MCF 10A (cell line): ENCODE measurements at regions of chr3 and their contacts with region 1.

Region 1: DNA sequence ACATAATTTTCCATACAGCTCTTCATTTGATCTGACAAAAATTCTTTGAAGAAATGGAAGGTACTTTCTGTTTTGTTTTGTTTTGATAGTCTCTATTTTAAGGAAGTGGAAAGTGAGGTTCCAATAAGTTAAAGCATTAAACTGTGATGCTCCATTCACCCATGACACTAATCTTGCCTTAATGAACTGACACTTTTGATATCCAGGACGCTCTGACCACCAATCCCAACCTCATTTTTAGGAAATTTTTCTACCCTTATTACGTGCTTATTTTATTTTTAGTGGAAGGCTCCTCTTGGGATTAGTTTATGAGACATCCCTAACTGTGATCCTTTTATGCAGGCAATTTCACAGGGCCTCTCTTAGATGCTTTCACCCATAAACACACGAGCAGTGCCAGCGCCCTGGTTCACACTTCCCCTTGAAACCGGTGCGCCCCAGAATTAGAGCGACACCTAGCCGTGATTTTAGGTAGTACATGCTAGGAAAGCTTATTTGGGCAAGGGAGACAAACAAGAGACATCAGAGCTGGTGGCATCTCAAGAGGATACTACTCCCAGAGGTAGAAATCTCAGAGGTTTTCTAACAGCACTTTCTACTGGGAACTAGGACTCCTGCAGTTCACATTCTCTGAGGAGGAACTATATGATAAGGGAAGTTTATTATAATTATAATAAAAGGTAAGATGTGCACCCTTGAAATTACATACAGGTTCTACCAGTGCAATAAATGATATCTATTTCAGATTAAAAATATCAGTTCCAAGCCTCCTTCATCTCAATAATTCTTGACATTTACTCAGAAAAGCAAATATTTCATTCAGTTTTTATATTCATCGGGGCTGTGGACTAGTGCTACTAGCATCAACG is 173.9 kb downstream of the SLC9A9 start:
- DNase-seq: peak; percentile 82
- H3K4me3 Mint-ChIP-seq: no peak overlapping the region
- H3K27ac Mint-ChIP-seq: peak overlapping the region; percentile 6
- H3K4me1 Mint-ChIP-seq: peaks cover 6% of the 10 kb centered on the region
- H3K27me3 Mint-ChIP-seq: no peaks in the 10 kb centered on the region
- CTCF ChIP-seq: peak; percentile 90

Region 2: GRCh38 chr3:143060906-143061305 is 613.4 kb before region 1 on chr3:
- CTCF ChIA-PET with region 1: interaction called, 4 read pairs
- POLR2A ChIA-PET with region 1: no interaction called
- intact Hi-C with region 1: loop called (anchors 10 kb)
- DNase-seq: peak; percentile 54
- H3K4me3 Mint-ChIP-seq: no peak overlapping the region
- H3K27ac Mint-ChIP-seq: peak overlapping the region; percentile 25
- H3K4me1 Mint-ChIP-seq: peaks cover 5% of the 10 kb centered on the region
- H3K27me3 Mint-ChIP-seq: no peaks in the 10 kb centered on the region
- CTCF ChIP-seq: no peak

Region 3: GRCh38 chr3:143135150-143135549 is 539.2 kb before region 1 on chr3:
- CTCF ChIA-PET with region 1: interaction called, 4 read pairs
- POLR2A ChIA-PET with region 1: no interaction called
- intact Hi-C with region 1: loop called (anchors 1 kb)
- DNase-seq: peak; percentile 95
- H3K4me3 Mint-ChIP-seq: no peak overlapping the region
- H3K27ac Mint-ChIP-seq: no peak overlapping the region
- H3K4me1 Mint-ChIP-seq: peaks cover 13% of the 10 kb centered on the region
- H3K27me3 Mint-ChIP-seq: no peaks in the 10 kb centered on the region
- CTCF ChIP-seq: no peak

Region 4: GRCh38 chr3:143266927-143267326 is 407.4 kb before region 1 on chr3:
- CTCF ChIA-PET with region 1: no interaction called
- POLR2A ChIA-PET with region 1: no interaction called
- intact Hi-C with region 1: no loop called
- DNase-seq: no peak
- H3K4me3 Mint-ChIP-seq: no peak overlapping the region
- H3K27ac Mint-ChIP-seq: no peak overlapping the region
- H3K4me1 Mint-ChIP-seq: peaks cover 16% of the 10 kb centered on the region
- H3K27me3 Mint-ChIP-seq: no peaks in the 10 kb centered on the region
- CTCF ChIP-seq: no peak

Region 5: GRCh38 chr3:143619231-143619630 is 55.1 kb before region 1 on chr3:
- CTCF ChIA-PET with region 1: no interaction called
- POLR2A ChIA-PET with region 1: no interaction called
- intact Hi-C with region 1: no loop called
- DNase-seq: no peak
- H3K4me3 Mint-ChIP-seq: no peak overlapping the region
- H3K27ac Mint-ChIP-seq: no peak overlapping the region
- H3K4me1 Mint-ChIP-seq: peaks cover 18% of the 10 kb centered on the region
- H3K27me3 Mint-ChIP-seq: no peaks in the 10 kb centered on the region
- CTCF ChIP-seq: no peak

Region 6: DNA sequence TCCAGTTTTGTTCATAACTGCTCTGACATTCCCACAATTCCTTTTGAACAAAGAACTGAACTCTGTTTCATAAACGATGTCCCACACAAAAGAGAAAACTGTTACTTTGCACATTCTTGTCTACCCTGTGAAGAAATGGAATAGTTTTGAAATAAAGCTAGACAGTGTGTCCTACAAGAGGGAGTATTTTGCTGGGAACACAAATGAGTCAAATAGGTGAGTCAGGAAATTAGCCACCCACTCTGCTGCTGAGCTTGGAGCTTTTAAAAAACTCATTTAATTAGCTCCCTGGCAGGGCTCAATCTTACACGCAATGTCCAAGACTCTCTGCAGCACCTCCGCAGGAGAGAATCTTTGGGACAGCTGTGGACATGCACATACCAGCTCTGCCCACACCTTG is 19.4 kb before region 1 on chr3:
- CTCF ChIA-PET with region 1: interaction called, 23 read pairs
- POLR2A ChIA-PET with region 1: interaction called, 11 read pairs
- intact Hi-C with region 1: no loop called
- DNase-seq: peak; percentile 72
- H3K4me3 Mint-ChIP-seq: no peak overlapping the region
- H3K27ac Mint-ChIP-seq: peak overlapping the region; percentile 72
- H3K4me1 Mint-ChIP-seq: peaks cover 28% of the 10 kb centered on the region
- H3K27me3 Mint-ChIP-seq: no peaks in the 10 kb centered on the region
- CTCF ChIP-seq: no peak

Region 7: DNA sequence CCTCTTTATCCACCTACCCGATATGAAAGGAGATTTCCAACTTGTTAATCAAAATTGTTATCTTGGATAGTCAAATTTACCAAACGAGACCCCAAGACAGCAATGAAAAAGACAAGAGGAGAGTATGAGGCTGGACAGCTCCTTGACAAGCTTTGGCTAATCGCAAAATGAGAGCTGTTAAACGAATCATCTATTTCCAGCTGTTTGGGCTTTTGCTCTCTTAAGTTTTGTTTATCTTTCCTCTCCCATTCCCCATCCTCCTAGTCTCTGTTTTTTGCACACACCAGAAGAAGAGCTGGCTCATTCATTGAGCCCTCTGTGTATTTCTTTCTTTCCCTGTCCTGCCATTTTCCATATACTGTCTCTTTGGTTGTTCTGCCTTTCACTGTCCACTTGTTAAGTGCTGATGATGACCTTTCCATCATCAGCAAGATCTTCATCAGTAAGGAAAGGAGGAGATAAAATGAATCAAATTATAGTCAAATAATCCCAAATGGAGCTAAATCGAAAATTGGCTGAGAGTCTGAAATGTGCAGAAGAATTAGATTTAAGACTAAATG is 12.4 kb after region 1 on chr3:
- CTCF ChIA-PET with region 1: interaction called, 11 read pairs
- POLR2A ChIA-PET with region 1: interaction called, 4 read pairs
- intact Hi-C with region 1: no loop called
- DNase-seq: no peak
- H3K4me3 Mint-ChIP-seq: no peak overlapping the region
- H3K27ac Mint-ChIP-seq: no peak overlapping the region
- H3K4me1 Mint-ChIP-seq: peaks cover 2% of the 10 kb centered on the region
- H3K27me3 Mint-ChIP-seq: no peaks in the 10 kb centered on the region
- CTCF ChIP-seq: no peak

Region 8: GRCh38 chr3:143763564-143764162 is 89.3 kb after region 1 on chr3:
- CTCF ChIA-PET with region 1: no interaction called
- POLR2A ChIA-PET with region 1: no interaction called
- intact Hi-C with region 1: loop called (anchors 1 kb)
- DNase-seq: peak; percentile 44
- H3K4me3 Mint-ChIP-seq: no peak overlapping the region
- H3K27ac Mint-ChIP-seq: no peak overlapping the region
- H3K4me1 Mint-ChIP-seq: no peaks in the 10 kb centered on the region
- H3K27me3 Mint-ChIP-seq: no peaks in the 10 kb centered on the region
- CTCF ChIP-seq: peak; percentile 54

Region 9: GRCh38 chr3:144114767-144115166 is 440.4 kb after region 1 on chr3:
- CTCF ChIA-PET with region 1: no interaction called
- POLR2A ChIA-PET with region 1: no interaction called
- intact Hi-C with region 1: no loop called
- DNase-seq: no peak
- H3K4me3 Mint-ChIP-seq: no peak overlapping the region
- H3K27ac Mint-ChIP-seq: no peak overlapping the region
- H3K4me1 Mint-ChIP-seq: peaks cover 11% of the 10 kb centered on the region
- H3K27me3 Mint-ChIP-seq: peaks cover 11% of the 10 kb centered on the region
- CTCF ChIP-seq: no peak